SK-N-SH (cell line): ENCODE measurements at regions of chr9 and their contacts with region 1.

Region 1: DNA sequence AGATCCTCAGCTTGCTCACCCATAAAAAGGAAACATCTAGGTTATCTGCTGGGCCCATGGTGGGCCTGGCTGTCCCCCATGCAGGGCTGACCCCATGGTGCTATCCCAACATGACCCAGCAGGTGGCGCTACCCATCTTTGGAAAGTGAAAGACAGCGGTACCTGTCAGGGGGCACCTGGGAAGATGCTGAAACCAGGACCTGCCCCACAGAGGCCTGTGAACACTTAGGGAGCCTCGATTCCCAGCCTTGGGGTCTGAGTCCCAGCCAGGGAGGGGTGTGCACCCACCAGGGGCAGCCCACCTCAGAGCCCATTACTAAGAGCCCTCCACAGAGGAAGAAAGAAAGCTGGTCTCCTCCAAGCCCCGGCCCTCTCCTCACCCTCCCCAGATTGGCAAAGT is 46.6 kb upstream of the IPPK start:
- DNase-seq: peak; percentile 90
- H3K4me3 ChIP-seq: no peak overlapping the region
- H3K27ac ChIP-seq: no peak overlapping the region
- H3K4me1 ChIP-seq: no peaks in the 10 kb centered on the region; a peak in 1 of 4 replicates
- H3K27me3 ChIP-seq: no peaks in the 10 kb centered on the region
- CTCF ChIP-seq: peak; percentile 92
- EP300 ChIP-seq: no peak
- RAD21 ChIP-seq: peak; percentile 85

Region 2: GRCh38 chr9:92696619-92697018 is 19.9 kb before region 1 on chr9:
- CTCF ChIA-PET with region 1: interaction called, 11 read pairs
- POLR2A ChIA-PET with region 1: no interaction called
- DNase-seq: no peak
- H3K4me3 ChIP-seq: no peak overlapping the region
- H3K27ac ChIP-seq: no peak overlapping the region
- H3K4me1 ChIP-seq: no peaks in the 10 kb centered on the region
- H3K27me3 ChIP-seq: no peaks in the 10 kb centered on the region
- CTCF ChIP-seq: no peak
- EP300 ChIP-seq: no peak
- RAD21 ChIP-seq: no peak

Region 3: GRCh38 chr9:92728831-92729734 is 12.5 kb after region 1 on chr9:
- CTCF ChIA-PET with region 1: interaction called, 24 read pairs
- POLR2A ChIA-PET with region 1: no interaction called
- DNase-seq: peak; percentile 77
- H3K4me3 ChIP-seq: no peak overlapping the region
- H3K27ac ChIP-seq: no peak overlapping the region; a peak in 1 of 4 replicates
- H3K4me1 ChIP-seq: peaks cover 0 to 32% of the 10 kb centered on the region in 2 experiments; a peak in 2 of 4 replicates
- H3K27me3 ChIP-seq: no peaks in the 10 kb centered on the region
- CTCF ChIP-seq: peak; percentile 39; the same call in 1 of the 2 replicates
- EP300 ChIP-seq: no peak
- RAD21 ChIP-seq: peak; percentile 54

Region 4: GRCh38 chr9:92764988-92765936 is 48.7 kb after region 1 on chr9:
- CTCF ChIA-PET with region 1: interaction called, 32 read pairs
- POLR2A ChIA-PET with region 1: interaction called, 4 read pairs
- DNase-seq: peak; percentile 91
- H3K4me3 ChIP-seq: peak overlapping the region; percentile 79 to 88
- H3K27ac ChIP-seq: peak overlapping the region; percentile 97 to 98
- H3K4me1 ChIP-seq: peaks cover 9 to 38% of the 10 kb centered on the region in 2 experiments; a peak in 2 of 4 replicates
- H3K27me3 ChIP-seq: no peaks in the 10 kb centered on the region
- CTCF ChIP-seq: peak; percentile 97
- EP300 ChIP-seq: no peak
- RAD21 ChIP-seq: peak; percentile 52

Region 5: DNA sequence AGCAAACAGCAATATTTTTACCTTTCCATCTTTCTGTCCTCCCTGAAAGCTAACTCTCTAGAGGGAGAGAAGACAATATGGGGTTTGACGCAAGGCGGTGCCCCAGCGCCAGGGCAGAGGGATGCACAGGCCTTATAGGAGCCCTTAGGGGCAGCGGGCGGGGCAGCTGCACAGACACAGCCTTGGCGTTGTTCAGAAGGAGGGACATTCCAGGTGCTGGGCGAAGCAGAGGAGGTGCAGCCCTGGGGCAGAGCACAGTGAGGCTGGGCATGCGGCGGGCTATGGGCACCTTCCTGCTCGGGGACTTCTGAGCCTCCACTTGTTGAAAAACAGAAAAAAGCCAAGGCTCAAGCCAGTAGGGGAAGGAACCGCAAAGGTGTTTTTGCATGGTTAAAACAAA is 81.8 kb after region 1 on chr9:
- CTCF ChIA-PET with region 1: interaction called, 177 read pairs
- POLR2A ChIA-PET with region 1: no interaction called
- DNase-seq: no peak
- H3K4me3 ChIP-seq: no peak overlapping the region
- H3K27ac ChIP-seq: no peak overlapping the region
- H3K4me1 ChIP-seq: no peaks in the 10 kb centered on the region
- H3K27me3 ChIP-seq: peaks cover 13% of the 10 kb centered on the region
- CTCF ChIP-seq: no peak
- EP300 ChIP-seq: no peak
- RAD21 ChIP-seq: no peak